PC-9 (cell line): ENCODE measurements at regions of chr2 and their contacts with region 1.

Region 1: GRCh38 chr2:179751163-179751809 is 110.1 kb downstream of the ZNF385B start:
- DNase-seq: peak in 1 of 2 experiments; percentile 10
- H3K4me3 ChIP-seq: no peak overlapping the region
- H3K27ac ChIP-seq: no peak overlapping the region
- H3K4me1 ChIP-seq: no peaks in the 10 kb centered on the region
- H3K27me3 ChIP-seq: no peaks in the 10 kb centered on the region
- CTCF ChIP-seq: peak; percentile 97

Region 2: DNA sequence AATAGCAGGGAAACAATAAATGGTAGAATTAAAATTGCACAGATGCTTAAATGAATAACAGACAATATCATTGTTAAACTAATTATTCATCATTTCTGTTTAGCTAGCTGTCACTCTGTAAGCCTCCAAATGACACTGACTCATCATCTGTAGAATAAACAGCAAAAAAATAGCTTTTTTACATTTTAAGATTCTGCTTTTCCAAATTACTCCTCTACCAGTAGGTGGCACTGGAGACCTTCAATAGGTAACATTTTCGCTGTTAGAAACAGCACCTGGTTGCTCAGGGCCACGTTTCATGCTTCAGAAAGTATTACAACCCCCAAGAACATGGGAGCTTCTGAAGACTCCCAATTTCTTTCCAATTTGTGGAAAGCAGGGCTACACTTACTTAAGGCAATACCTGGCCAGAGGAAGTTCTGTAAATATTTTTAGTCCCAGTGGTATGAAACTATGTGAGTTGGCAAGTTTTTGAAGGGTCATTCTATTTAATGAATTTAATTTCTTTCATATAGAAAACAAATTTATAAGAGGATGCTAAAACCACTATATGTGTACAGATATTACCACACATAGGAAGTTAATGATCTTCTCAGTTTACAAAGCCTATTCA is 989.4 kb before region 1 on chr2:
- CTCF ChIA-PET with region 1: no interaction called
- POLR2A ChIA-PET with region 1: no interaction called
- intact Hi-C with region 1: loop called (anchors 1 kb)
- DNase-seq: peak; percentile 46 to 75
- H3K4me3 ChIP-seq: no peak overlapping the region
- H3K27ac ChIP-seq: no peak overlapping the region
- H3K4me1 ChIP-seq: peaks cover 11% of the 10 kb centered on the region
- H3K27me3 ChIP-seq: no peaks in the 10 kb centered on the region
- CTCF ChIP-seq: peak; percentile 98

Region 3: DNA sequence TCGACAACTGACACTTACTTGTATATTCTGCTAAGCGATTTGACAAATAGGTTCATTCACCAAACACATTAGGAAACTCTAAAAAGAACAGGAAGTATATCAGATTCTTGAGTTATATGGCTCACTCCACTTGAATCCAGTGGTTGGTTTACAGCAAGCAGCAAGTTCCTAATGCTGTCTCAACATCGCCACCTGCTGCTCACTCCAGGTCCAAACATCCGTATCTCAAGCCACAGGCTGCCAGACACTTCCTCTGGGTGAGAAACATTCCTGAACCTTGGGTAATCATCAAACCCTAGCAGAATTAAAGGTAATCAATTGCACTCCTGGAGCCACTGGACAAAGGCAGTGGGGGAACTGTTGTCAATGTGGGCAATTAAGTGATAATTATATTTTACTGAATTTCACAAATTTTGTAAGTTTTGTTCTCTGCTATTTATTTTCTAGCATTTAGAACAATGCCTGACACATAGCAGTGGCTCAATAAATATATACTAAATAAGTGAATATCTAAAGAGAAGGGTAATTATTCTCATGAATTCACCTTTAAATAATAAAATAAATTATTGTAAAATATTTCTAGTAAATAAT is 836.9 kb before region 1 on chr2:
- CTCF ChIA-PET with region 1: no interaction called
- POLR2A ChIA-PET with region 1: no interaction called
- intact Hi-C with region 1: loop called (anchors 5 kb)
- DNase-seq: peak; percentile 83 to 84
- H3K4me3 ChIP-seq: no peak overlapping the region
- H3K27ac ChIP-seq: no peak overlapping the region
- H3K4me1 ChIP-seq: peaks cover 30% of the 10 kb centered on the region
- H3K27me3 ChIP-seq: no peaks in the 10 kb centered on the region
- CTCF ChIP-seq: peak; percentile 99

Region 4: DNA sequence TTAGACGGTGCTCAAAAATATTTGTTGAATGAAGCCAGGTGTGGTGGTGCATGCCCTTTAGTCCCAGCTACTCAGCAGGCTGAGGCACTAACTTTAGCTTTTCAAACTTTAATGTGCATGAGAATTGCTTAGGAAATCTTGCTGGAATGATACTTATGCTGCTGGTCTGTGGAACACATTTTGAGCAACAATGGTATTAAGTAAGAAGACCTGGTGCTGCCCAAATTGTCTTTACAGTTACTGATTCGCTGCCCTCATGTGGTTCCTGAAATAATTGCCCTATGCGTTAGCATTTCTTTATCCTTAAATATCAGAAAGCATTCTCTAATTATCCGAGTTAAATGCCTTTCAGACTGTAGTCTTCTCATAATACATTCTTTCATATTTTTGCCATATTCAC is 410.6 kb before region 1 on chr2:
- CTCF ChIA-PET with region 1: no interaction called
- POLR2A ChIA-PET with region 1: no interaction called
- intact Hi-C with region 1: loop called (anchors 2 kb)
- DNase-seq: peak in 1 of 2 experiments; percentile 35
- H3K4me3 ChIP-seq: no peak overlapping the region
- H3K27ac ChIP-seq: no peak overlapping the region
- H3K4me1 ChIP-seq: peaks cover 22% of the 10 kb centered on the region
- H3K27me3 ChIP-seq: no peaks in the 10 kb centered on the region
- CTCF ChIP-seq: peak; percentile 72

Region 5: DNA sequence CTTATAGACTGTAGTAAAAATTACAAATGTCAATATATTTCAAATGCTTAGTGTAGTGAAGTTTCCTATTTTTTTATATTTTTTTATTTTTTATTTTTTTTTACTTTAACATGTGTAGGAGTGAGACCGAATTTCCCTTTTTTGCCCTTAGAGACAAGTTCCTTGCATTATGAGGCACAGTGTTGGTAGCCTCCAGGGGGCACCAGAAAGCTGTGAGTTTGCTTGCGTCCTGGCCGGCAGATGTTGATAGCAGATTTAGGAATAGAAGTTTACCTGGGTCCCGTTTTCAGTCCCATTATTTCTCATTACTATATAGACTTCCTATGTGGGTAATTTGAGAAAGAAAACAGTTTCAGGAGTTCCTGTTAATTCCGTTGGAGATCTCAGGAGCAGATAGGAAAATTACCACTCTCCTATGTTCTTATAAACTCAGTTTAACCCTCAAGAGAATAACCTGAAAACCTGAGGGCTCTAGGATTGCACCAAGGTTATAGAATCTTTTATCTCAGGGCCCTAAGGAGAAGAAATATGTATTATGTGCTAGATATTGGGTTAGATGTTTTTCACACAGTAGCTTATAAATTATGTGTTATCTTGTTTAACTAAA is 329.1 kb before region 1 on chr2:
- CTCF ChIA-PET with region 1: interaction called, 3 read pairs
- POLR2A ChIA-PET with region 1: interaction called, 4 read pairs
- intact Hi-C with region 1: loop called (anchors 1 kb)
- DNase-seq: peak; percentile 56 to 83
- H3K4me3 ChIP-seq: no peak overlapping the region
- H3K27ac ChIP-seq: no peak overlapping the region
- H3K4me1 ChIP-seq: no peaks in the 10 kb centered on the region
- H3K27me3 ChIP-seq: no peaks in the 10 kb centered on the region
- CTCF ChIP-seq: peak; percentile 88

Region 6: GRCh38 chr2:179595284-179595683 is 156.0 kb before region 1 on chr2:
- CTCF ChIA-PET with region 1: no interaction called
- POLR2A ChIA-PET with region 1: interaction called, 4 read pairs
- intact Hi-C with region 1: loop called (anchors 1 kb)
- DNase-seq: no peak
- H3K4me3 ChIP-seq: no peak overlapping the region
- H3K27ac ChIP-seq: no peak overlapping the region
- H3K4me1 ChIP-seq: peaks cover 12% of the 10 kb centered on the region
- H3K27me3 ChIP-seq: no peaks in the 10 kb centered on the region
- CTCF ChIP-seq: no peak

Region 7: GRCh38 chr2:179692610-179693009 is 58.7 kb before region 1 on chr2:
- CTCF ChIA-PET with region 1: no interaction called
- POLR2A ChIA-PET with region 1: no interaction called
- intact Hi-C with region 1: no loop called
- DNase-seq: peak in 1 of 2 experiments; percentile 16
- H3K4me3 ChIP-seq: no peak overlapping the region
- H3K27ac ChIP-seq: no peak overlapping the region
- H3K4me1 ChIP-seq: no peaks in the 10 kb centered on the region
- H3K27me3 ChIP-seq: no peaks in the 10 kb centered on the region
- CTCF ChIP-seq: no peak

Region 8: GRCh38 chr2:179790235-179791217 is 39.2 kb after region 1 on chr2:
- CTCF ChIA-PET with region 1: no interaction called
- POLR2A ChIA-PET with region 1: no interaction called
- intact Hi-C with region 1: no loop called
- DNase-seq: no peak
- H3K4me3 ChIP-seq: no peak overlapping the region
- H3K27ac ChIP-seq: no peak overlapping the region
- H3K4me1 ChIP-seq: no peaks in the 10 kb centered on the region
- H3K27me3 ChIP-seq: no peaks in the 10 kb centered on the region
- CTCF ChIP-seq: no peak

Region 9: DNA sequence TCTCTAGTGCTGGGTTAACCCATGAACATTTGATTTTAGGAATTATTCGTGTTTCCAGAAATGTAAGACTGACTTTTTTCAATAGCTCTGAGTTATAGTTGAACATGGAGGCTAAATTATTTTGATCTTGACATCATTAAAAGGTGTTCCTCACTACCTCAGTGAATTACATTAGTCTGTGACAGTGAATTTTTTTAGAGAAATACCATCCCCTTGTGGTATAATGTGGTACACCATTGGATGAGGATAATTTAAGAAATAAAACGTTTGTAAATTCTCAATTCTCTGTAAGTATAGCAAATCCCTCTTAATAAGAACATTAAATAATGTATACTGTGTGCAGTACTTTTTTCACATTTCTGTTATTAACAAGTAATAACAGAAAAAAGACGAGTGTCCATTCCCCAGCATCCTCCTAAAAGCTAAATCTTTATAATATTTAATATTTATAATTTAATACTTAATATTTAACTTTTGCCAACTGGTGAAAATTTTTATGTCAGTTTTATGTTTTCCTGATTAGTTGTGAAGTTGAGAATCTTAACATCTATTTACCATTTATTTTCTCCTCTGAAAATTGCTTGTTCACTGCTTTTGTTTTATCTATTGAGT is 326.1 kb after region 1 on chr2:
- CTCF ChIA-PET with region 1: no interaction called
- POLR2A ChIA-PET with region 1: no interaction called
- intact Hi-C with region 1: loop called (anchors 10 kb)
- DNase-seq: no peak
- H3K4me3 ChIP-seq: no peak overlapping the region
- H3K27ac ChIP-seq: no peak overlapping the region
- H3K4me1 ChIP-seq: no peaks in the 10 kb centered on the region
- H3K27me3 ChIP-seq: no peaks in the 10 kb centered on the region
- CTCF ChIP-seq: peak; percentile 95

Region 10: GRCh38 chr2:180203972-180204371 is 452.7 kb after region 1 on chr2:
- CTCF ChIA-PET with region 1: no interaction called
- POLR2A ChIA-PET with region 1: no interaction called
- intact Hi-C with region 1: no loop called
- DNase-seq: no peak
- H3K4me3 ChIP-seq: no peak overlapping the region
- H3K27ac ChIP-seq: no peak overlapping the region
- H3K4me1 ChIP-seq: no peaks in the 10 kb centered on the region
- H3K27me3 ChIP-seq: no peaks in the 10 kb centered on the region
- CTCF ChIP-seq: no peak